ENCODE measurements at regions of chr17 and their contacts with region 1.

Region 1: DNA sequence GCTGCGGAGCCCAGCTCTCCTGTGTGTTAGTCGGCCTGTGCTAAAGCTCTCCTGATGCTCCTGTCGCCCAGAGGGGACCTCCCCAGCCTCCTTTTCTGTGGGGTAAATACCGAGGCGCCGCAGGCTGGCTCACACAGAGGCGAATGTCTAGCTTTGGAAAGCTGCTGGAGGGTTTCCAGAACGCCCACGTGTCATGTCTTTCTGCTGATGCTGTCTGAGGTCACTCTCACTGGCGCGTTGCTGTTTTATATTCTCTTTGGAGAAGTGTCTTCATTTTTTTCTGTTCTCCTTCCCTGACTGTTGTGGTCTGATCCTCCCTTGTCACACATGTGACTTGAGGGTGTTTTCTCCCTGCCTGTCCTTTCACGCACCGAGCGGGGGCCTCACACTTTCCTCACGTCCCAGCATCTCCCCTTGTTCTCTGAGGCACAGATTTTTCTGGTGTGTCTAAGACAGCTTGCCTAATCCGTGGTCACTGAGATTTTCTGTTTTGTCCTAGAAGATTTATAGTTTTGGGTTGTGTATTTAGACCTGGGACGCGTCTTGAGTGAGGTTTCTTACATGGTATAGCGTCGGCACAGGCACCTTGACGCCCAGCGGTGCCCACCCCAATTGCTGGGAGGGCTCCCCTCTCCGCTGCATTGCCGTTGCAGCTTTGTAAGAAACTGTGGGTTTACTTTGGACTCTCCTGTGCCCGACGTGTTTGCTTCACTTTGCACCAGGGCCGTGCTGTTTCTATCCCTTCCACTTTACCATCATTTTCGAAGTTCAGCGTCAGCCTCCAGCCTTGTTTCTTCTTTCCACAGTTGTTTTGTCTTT is 92.1 kb upstream of the ZNF750 start:
- DNase-seq: peak; percentile 59 to 77
- ATAC-seq: peak in 7 of 8 donors; percentile 39 to 70 (median 53)
- H3K4me3 ChIP-seq: no peak overlapping the region
- H3K27ac ChIP-seq: peak overlapping the region in 2 of 10 donors; percentile 36 to 66
- H3K4me1 ChIP-seq: peaks cover 0 to 7% (median 3%) of the 10 kb centered on the region in 9 donors
- H3K27me3 ChIP-seq: no peaks in the 10 kb centered on the region
- CTCF ChIP-seq: no peak

Region 2: GRCh38 chr17:82897514-82898249 is 34.2 kb before region 1 on chr17:
- intact Hi-C with region 1: loop called in 1 of 10 experiments (anchors 5 kb)
- DNase-seq: no peak
- ATAC-seq: no peak
- H3K4me3 ChIP-seq: no peak overlapping the region
- H3K27ac ChIP-seq: no peak overlapping the region
- H3K4me1 ChIP-seq: peaks cover 0 to 23% (median 18%) of the 10 kb centered on the region in 9 donors
- H3K27me3 ChIP-seq: no peaks in the 10 kb centered on the region
- CTCF ChIP-seq: no peak

Region 3: GRCh38 chr17:83000738-83001137 is 68.8 kb after region 1 on chr17:
- intact Hi-C with region 1: no loop called
- DNase-seq: no peak
- ATAC-seq: no peak
- H3K4me3 ChIP-seq: no peak overlapping the region
- H3K27ac ChIP-seq: no peak overlapping the region
- H3K4me1 ChIP-seq: no peaks in the 10 kb centered on the region
- H3K27me3 ChIP-seq: no peaks in the 10 kb centered on the region
- CTCF ChIP-seq: no peak